B cell (primary cell): ENCODE measurements at regions of chr20 and their contacts with region 1.

Region 1: DNA sequence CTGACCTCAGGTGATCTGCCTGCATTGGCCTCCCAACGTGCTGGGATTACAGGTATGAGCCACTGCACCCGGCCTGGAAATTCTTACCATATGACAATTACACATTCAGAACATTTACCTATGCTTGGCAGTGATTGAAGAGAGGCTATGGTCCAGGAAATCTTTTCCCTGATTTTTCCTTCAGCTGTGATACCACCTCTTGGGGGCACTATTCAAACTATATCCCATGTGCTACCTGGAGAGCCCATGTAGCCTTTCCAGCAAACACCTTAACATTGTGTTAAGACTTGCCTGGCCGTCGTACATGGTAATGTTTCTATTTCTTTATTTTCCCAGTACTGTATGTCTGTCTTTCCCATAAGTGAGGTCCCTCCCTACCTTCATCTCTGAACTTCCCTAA is 61.7 kb upstream of the C20orf144 start:
- DNase-seq: no peak
- ATAC-seq: no peak
- H3K4me3 ChIP-seq: no peak overlapping the region
- H3K4me3 Mint-ChIP-seq: no peak overlapping the region
- H3K27ac ChIP-seq: no peak overlapping the region
- H3K27ac Mint-ChIP-seq: no peak overlapping the region
- H3K4me1 ChIP-seq: peaks cover 27 to 34% of the 10 kb centered on the region in 2 donors
- H3K4me1 Mint-ChIP-seq: peaks cover 31% of the 10 kb centered on the region
- H3K27me3 ChIP-seq: no peaks in the 10 kb centered on the region
- H3K27me3 Mint-ChIP-seq: no peaks in the 10 kb centered on the region
- CTCF ChIP-seq: no peak

Region 2: DNA sequence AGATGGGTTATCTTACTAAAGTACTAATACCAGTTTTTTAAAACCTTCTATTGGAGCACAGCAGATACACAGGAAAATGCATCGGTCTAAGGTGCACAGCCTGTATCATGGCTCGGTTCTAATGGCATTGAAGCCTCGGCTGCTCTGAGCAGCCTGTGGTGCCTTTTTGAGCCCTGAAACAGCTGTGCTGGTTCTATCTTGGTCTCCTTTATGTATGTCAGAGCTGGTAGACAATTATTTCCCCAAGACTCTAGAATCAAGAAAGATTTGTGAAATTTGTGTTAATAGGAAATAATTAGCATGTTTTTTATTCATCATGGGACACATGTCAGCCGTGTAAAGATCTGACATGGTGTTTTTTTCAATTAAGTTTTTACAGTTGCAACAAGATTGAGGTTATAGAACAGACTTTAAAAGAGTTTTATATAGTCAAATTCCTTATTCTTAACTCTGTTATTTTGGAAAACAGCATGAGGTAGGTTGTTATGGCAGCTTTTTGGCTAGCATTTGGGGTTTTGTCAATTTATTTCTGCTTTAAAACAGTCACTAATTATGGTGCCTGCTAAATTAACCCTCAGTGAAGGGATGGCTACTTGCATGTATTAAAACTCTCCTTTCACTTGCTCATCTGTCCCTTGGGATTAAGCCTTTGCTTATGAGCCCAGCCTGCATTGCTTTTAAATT is 21.4 kb after region 1 on chr20:
- CTCF ChIA-PET with region 1: interaction called, 10 read pairs
- POLR2A ChIA-PET with region 1: no interaction called
- intact Hi-C with region 1: no loop called
- DNase-seq: no peak
- ATAC-seq: no peak
- H3K4me3 ChIP-seq: no peak overlapping the region
- H3K4me3 Mint-ChIP-seq: no peak overlapping the region
- H3K27ac ChIP-seq: no peak overlapping the region
- H3K27ac Mint-ChIP-seq: no peak overlapping the region
- H3K4me1 ChIP-seq: peaks cover 7 to 8% of the 10 kb centered on the region in 2 donors
- H3K4me1 Mint-ChIP-seq: peaks cover 18% of the 10 kb centered on the region
- H3K27me3 ChIP-seq: no peaks in the 10 kb centered on the region
- H3K27me3 Mint-ChIP-seq: no peaks in the 10 kb centered on the region
- CTCF ChIP-seq: no peak